ENCODE measurements at regions of chr2 and their contacts with region 1.

Region 1: DNA sequence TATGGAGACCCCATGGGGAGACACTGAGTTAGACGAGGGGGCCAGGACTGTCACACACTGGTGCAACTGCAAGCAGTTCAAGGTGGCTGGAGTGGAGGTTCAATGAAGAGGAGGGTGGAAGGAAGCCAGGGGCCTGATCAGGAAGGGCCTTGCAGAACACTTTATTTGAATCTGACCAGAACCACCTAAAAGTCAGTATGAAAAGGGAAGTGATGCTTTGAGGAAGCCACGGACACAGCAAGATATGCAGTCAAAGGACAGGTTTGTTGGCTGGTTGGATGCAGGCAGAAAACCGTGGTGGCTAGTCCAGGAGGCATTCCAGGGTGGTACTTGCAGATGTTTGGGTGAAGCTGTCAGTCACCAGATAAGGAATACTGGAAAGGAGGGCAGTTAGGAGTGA is 3.5 kb upstream of the FAM124B start:
- DNase-seq: no peak

Region 2: GRCh38 chr2:222819722-222820333 is 1585.6 kb before region 1 on chr2:
- intact Hi-C with region 1: no loop called
- DNase-seq: no peak

Region 3: DNA sequence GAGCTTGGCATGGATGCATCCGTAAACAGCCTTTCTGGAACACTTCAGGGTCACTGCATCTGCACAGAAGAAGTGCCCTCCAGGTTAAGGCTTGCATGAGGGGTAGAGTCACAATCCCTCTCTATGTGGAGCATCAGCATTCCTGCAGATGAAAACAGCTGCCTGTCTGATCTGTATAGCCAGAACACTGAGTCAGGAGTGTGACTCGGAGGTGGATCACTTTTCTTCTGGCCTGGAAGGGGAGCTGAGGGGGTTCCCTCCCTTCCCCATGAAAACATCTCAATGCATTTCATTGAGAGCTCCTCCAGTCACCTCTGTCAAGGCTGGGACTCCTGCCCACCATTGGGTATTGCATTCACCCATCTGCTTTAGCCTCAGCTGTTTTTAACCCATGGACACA is 293.8 kb before region 1 on chr2:
- intact Hi-C with region 1: no loop called
- DNase-seq: no peak

Region 4: GRCh38 chr2:224392545-224392944 is 12.9 kb before region 1 on chr2:
- intact Hi-C with region 1: no loop called
- DNase-seq: no peak

Region 5: GRCh38 chr2:224426656-224427055 is 21.2 kb after region 1 on chr2:
- intact Hi-C with region 1: loop called in 1 of 2 experiments (anchors 1 kb)
- DNase-seq: no peak